Sciatic nerve (tissue), 2 donors: ENCODE measurements at regions of chr6 and their contacts with region 1.

Region 1: DNA sequence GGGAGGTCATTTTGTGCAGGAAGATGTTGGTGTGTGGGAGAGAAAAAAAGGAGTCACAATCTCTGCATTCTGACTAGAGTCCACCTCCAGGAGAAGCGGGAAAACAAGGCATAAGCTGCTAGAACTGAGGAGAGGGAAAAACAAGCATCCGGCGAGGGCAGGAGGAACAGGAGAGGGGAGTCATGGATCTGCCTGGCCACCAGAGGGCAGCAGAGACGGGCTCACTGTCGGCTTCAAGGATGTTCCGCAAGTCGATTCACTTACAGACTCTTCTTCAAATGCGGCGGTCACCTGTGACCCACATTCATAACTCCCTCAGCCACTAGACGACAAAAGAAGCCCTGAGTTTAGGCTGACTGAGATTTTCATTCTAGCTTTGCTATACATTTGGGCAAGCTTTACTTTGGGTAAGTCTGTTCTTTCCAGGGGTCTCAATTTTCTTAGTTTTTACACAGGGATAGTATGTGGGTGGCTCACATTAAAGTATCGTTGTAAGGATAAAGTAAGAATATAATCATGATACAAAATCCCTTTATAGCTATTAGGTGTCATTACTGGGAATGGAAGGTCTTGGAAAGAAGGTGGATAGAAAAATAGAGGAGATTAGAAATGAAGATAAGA is 6.6 kb upstream of the BTNL2 start:
- DNase-seq: peak; percentile 89
- ATAC-seq: peak; percentile 91

Region 2: DNA sequence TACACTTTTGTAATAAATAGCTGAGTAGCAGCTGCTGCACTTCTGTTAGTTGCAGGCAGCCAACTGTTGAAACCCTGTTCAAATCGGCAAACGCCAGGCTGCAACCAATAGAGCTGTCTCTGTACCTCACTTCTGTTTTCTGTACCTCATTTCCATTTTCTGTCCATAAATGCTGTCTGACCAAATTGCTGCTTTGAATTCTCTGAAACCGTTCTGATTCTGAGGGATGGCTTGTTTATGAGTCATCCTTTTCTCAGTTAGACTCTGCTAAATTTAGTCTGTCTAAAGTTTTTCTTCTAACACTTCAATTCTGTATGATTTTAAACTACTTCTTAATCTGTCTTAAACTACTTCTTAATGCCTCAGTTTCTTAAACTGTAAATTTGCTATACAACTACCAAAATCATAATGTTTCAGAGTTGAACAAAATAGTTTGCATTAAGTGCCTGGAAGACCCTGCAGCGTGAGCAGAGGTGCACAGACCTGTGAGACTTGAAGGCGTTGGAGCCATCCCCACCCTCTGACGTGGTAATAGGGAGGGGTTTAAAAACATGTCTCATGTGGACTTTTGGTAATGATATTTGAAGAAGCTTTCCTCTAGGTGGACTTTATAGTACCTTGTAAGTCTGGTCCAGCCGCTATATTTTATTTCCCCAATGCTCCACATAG is 16.2 kb before region 1 on chr6:
- intact Hi-C with region 1: no loop called
- DNase-seq: no peak
- ATAC-seq: no peak

Region 3: DNA sequence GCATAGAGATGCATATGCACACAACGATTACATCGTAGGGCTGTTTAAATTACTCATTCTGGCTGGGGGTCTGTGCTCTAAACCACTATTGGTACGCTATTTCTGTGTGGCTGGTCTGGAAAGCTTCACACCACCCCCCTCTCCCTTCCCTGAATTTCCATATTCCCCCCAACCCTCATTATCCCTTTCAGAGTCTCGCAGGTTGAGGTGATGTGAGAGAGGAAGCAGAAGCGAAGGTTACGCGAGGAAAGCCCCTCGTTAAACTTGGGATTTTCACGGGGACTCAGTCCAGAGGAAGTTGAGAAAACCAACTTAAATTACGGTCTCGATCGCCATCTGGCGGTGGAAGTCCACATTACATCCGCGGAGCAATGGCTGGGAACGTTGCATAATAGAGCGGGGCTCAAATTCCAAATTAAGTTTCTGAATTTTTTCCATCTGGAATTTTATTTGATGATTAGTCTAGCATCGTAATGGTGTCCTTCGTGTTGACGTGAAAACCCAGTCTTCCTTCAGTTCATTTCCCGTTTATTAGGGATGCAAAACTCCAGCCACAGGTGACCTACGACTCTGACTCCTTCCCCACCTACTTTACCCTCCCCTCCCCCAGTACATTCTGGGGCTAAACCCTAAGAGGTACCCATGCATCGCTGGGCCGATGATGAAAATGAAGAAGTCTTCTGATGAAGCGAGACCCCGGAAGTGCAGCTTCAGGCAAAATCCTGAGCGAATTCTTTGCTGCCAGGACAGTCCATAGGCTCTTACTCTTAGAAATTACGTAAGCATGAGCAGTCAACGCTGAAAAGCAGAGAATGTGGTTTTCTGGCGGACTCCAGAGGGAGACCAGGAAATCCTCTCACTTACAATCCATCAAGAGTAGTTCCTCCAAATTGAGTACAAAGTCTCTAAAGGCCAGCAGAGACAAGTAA is 383.6 kb after region 1 on chr6:
- intact Hi-C with region 1: loop called (anchors 10 kb)
- DNase-seq: peak; percentile 93
- ATAC-seq: peak; percentile 90